ENCODE measurements at regions of chr7 and their contacts with region 1.

Region 1: DNA sequence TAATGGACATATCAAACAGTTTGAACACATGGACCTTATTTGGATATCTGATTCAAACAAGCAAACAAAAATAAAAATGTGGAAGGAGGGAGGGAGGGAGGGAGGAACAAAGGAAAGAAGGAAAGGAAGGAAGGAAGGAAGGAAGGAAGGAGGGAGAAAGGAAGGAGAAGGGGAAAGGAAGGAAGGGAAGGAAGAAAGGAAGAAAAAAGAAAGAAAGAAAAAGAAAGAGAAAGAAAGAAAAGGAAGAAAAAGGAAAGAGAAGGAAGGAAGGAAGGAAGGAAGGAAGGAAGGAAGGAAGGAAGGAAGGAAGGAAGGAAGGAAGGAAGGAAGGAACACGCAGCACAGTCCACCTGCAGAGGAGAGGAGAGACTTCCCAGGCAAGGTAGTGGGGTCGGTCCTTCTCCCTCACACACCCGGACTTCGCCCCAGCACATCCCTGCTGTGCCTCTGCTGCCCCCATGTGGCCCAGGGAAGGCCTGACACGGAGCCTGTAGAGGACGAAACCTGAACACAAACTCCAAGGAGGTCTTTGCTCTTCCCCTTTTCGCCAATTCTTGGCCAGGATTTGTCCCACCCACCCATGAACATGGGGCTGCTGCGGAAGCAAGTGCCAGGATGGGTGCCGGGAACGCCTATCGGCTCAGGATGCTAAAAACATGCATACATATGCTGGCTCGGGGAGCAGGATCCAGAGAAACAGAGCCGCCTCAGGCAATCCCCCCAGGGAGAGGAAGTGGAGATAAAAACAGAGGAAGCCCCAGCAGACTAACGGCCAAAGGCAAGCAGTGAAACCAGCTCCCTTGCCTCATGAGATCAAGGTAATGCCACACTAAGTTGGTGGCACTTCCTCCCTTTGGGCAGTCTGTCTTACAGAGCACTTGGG is 52.3 kb upstream of the DGKI start:
- DNase-seq: peak; percentile 44
- H3K4me3 ChIP-seq: peak overlapping the region in 1 of 3 experiments; percentile 28
- H3K27ac ChIP-seq: no peak overlapping the region
- H3K4me1 ChIP-seq: no peaks in the 10 kb centered on the region
- H3K27me3 ChIP-seq: no peaks in the 10 kb centered on the region
- CTCF ChIP-seq: peak; percentile 91 to 97

Region 2: GRCh38 chr7:137656227-137656849 is 242.7 kb before region 1 on chr7:
- CTCF ChIA-PET with region 1: no interaction called
- dilution Hi-C with region 1: no loop called
- in situ Hi-C with region 1: loop called in 1 of 2 experiments (anchors 5 kb)
- intact Hi-C with region 1: loop called (anchors 1 kb)
- DNase-seq: peak; percentile 44
- H3K4me3 ChIP-seq: no peak overlapping the region
- H3K27ac ChIP-seq: no peak overlapping the region
- H3K4me1 ChIP-seq: no peaks in the 10 kb centered on the region
- H3K27me3 ChIP-seq: no peaks in the 10 kb centered on the region
- CTCF ChIP-seq: peak; percentile 79 to 87

Region 3: GRCh38 chr7:137850972-137851945 is 47.8 kb before region 1 on chr7:
- CTCF ChIA-PET with region 1: no interaction called
- dilution Hi-C with region 1: no loop called
- in situ Hi-C with region 1: no loop called
- intact Hi-C with region 1: loop called (anchors 5 kb)
- DNase-seq: peak; percentile 45
- H3K4me3 ChIP-seq: no peak overlapping the region
- H3K27ac ChIP-seq: no peak overlapping the region
- H3K4me1 ChIP-seq: peaks cover 6% of the 10 kb centered on the region
- H3K27me3 ChIP-seq: peaks cover 9% of the 10 kb centered on the region
- CTCF ChIP-seq: no peak

Region 4: DNA sequence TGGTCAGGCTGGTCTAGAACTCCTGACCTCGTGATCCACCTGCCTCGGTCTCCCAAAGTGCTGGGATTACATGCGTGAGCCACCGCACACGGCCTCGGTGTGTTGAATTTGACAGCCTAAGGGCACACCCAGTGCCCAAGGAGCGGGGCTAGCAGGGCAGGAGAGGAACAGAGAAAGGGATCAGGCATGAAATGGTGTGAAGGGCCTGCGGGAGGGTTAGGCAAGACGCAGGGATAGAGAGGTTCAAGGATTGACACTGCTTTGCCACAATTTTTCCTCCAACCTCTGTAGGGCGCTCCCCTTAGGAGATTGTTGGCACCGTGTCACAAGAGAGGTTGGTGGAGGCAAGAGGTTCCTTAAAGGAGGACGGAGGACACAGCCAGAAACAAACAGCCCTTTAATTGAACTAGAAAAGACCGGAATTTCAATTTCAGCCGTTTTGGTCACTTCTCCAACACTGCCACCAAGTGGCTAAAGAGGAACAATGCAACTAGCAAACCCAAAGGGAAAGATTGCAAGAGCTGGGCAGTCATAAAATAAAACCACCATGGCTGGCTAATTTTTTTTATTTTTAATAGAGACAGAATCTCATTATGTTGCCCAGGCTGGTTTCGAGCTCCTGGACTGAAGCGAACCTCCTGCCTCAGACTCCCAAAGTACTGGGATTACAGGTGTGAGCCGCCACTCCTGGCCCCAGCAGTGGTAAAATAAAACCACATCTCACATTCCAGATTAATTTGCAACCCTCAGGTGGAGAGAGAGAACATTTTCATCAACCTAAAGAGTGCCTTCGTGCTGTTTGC is 109.7 kb after region 1 on chr7:
- CTCF ChIA-PET with region 1: no interaction called
- dilution Hi-C with region 1: no loop called
- in situ Hi-C with region 1: loop called in 1 of 2 experiments (anchors 10 kb)
- intact Hi-C with region 1: loop called (anchors 1 kb)
- DNase-seq: peak; percentile 53
- H3K4me3 ChIP-seq: no peak overlapping the region
- H3K27ac ChIP-seq: no peak overlapping the region
- H3K4me1 ChIP-seq: no peaks in the 10 kb centered on the region
- H3K27me3 ChIP-seq: no peaks in the 10 kb centered on the region
- CTCF ChIP-seq: peak; percentile 69 to 86

Region 5: DNA sequence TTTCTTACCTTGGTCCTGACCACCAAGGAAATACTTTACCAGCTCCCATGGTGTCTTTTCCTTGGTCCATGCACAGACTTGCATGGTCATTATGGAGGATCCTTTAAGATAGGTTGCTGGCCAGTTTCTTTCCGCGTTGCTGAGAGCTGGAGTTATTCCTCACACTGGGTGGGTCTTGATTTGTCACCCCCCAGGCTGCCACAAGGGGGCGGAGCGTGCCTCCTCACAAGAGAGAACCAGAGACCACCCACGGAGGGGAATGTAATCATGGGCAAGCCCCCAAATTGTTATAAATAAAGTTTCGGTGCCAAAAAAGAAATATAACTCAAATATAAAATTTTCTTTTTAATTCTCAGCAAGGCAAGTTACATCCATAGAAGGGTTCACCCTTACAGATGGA is 550.5 kb after region 1 on chr7:
- CTCF ChIA-PET with region 1: no interaction called
- dilution Hi-C with region 1: no loop called
- in situ Hi-C with region 1: no loop called
- intact Hi-C with region 1: loop called (anchors 10 kb)
- DNase-seq: no peak
- H3K4me3 ChIP-seq: no peak overlapping the region
- H3K27ac ChIP-seq: no peak overlapping the region
- H3K4me1 ChIP-seq: no peaks in the 10 kb centered on the region
- H3K27me3 ChIP-seq: no peaks in the 10 kb centered on the region
- CTCF ChIP-seq: peak in 1 of 2 donors; percentile 8

Region 6: DNA sequence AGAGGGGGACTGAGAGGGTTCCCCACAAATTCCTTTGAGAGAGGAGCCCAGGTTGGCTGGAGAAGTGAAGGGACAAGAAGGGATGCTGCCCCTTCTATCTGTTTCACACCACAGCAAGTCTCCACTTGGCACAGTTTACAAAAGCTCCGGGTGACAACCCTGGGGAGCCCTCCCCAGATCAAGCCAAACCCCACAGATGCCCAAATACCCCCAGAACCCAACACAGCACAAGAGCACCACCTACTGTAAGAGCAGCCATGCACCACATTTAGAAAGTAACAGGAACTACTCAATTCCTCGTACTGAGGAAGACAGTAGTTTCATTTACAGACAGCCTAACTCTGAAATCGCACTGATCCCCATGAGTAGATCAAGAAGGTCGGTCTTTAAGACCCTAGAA is 966.8 kb after region 1 on chr7:
- CTCF ChIA-PET with region 1: no interaction called
- dilution Hi-C with region 1: no loop called
- in situ Hi-C with region 1: no loop called
- intact Hi-C with region 1: loop called (anchors 5 kb)
- DNase-seq: no peak
- H3K4me3 ChIP-seq: no peak overlapping the region
- H3K27ac ChIP-seq: no peak overlapping the region
- H3K4me1 ChIP-seq: peaks cover 7% of the 10 kb centered on the region
- H3K27me3 ChIP-seq: no peaks in the 10 kb centered on the region
- CTCF ChIP-seq: peak; percentile 37 to 69